ENCODE measurements at regions of chr14 and their contacts with region 1.

Region 1: GRCh38 chr14:54377501-54377900 is 19.3 kb upstream of the CDKN3 start:
- DNase-seq: no peak
- ATAC-seq: no peak
- H3K4me3 ChIP-seq: no peak overlapping the region
- H3K4me3 Mint-ChIP-seq: no peak overlapping the region
- H3K27ac ChIP-seq: no peak overlapping the region
- H3K27ac Mint-ChIP-seq: no peak overlapping the region
- H3K4me1 ChIP-seq: peaks cover 10% of the 10 kb centered on the region in 2 donors
- H3K4me1 Mint-ChIP-seq: peaks cover 25% of the 10 kb centered on the region
- H3K27me3 ChIP-seq: peaks cover 0 to 5% (median 3%) of the 10 kb centered on the region in 4 experiments
- H3K27me3 Mint-ChIP-seq: peaks cover 18% of the 10 kb centered on the region
- CTCF ChIP-seq: no peak

Region 2: GRCh38 chr14:54362089-54362504 is 15.4 kb before region 1 on chr14:
- CTCF ChIA-PET with region 1: no interaction called
- POLR2A ChIA-PET with region 1: no interaction called
- intact Hi-C with region 1: no loop called
- DNase-seq: no peak
- ATAC-seq: no peak
- H3K4me3 ChIP-seq: no peak overlapping the region
- H3K4me3 Mint-ChIP-seq: no peak overlapping the region
- H3K27ac ChIP-seq: no peak overlapping the region
- H3K27ac Mint-ChIP-seq: no peak overlapping the region
- H3K4me1 ChIP-seq: no peaks in the 10 kb centered on the region
- H3K4me1 Mint-ChIP-seq: peaks cover 1% of the 10 kb centered on the region
- H3K27me3 ChIP-seq: peaks cover 0 to 6% (median 0%) of the 10 kb centered on the region in 4 experiments
- H3K27me3 Mint-ChIP-seq: peaks cover 35% of the 10 kb centered on the region
- CTCF ChIP-seq: no peak

Region 3: GRCh38 chr14:54483073-54483745 is 105.7 kb after region 1 on chr14:
- CTCF ChIA-PET with region 1: no interaction called
- POLR2A ChIA-PET with region 1: no interaction called
- intact Hi-C with region 1: loop called (anchors 5 kb)
- DNase-seq: peak; percentile 52
- ATAC-seq: peak; percentile 73
- H3K4me3 ChIP-seq: peak overlapping the region; percentile 29 to 70 (median 45)
- H3K4me3 Mint-ChIP-seq: peak overlapping the region; percentile 67
- H3K27ac ChIP-seq: peak overlapping the region; percentile 33 to 83
- H3K27ac Mint-ChIP-seq: peak overlapping the region; percentile 87
- H3K4me1 ChIP-seq: peaks cover 40 to 57% of the 10 kb centered on the region in 2 donors
- H3K4me1 Mint-ChIP-seq: peaks cover 63% of the 10 kb centered on the region
- H3K27me3 ChIP-seq: no peaks in the 10 kb centered on the region
- H3K27me3 Mint-ChIP-seq: no peaks in the 10 kb centered on the region
- CTCF ChIP-seq: no peak

Region 4: DNA sequence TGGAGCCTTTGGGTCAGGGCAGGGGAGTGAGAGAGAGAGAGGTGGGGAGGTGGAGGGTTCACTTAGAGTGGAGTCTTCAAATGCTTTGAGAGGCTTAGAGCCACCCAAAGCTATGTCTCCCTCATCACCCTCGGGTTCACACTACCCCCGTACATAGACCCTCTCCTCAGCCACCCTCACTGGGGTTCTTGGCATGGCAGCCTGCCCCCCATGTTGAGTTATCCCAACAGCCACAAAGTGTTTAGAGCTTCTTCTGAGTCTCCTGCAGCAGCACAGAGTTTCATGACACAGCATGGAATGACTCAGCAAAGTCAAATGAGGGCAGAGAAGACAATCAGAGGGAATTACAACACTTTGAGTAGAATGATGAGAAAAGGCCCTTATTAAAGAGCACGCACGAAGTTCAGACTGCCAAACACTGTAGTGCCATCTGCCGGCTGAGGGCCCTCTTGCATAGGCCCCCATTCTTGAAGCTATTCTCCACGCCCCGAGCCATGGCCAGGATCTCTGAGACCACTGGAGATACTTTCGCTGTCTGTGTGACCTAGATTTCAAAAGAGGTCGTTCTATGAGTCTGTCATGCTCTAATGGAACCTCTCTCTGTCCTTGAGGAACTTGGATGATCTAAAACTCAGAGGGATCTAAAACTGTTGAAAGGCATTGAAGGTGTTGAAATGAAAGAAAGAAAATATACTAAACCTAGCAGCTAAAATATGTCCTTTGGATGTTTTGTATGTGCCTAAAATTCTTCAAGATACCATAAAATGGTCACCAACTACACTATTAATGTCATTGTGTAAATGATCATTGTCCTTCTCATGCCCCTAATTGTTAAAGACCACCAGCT is 1962.6 kb after region 1 on chr14:
- CTCF ChIA-PET with region 1: no interaction called
- POLR2A ChIA-PET with region 1: no interaction called
- intact Hi-C with region 1: no loop called
- DNase-seq: peak; percentile 60
- ATAC-seq: peak; percentile 41
- H3K4me3 ChIP-seq: no peak overlapping the region
- H3K4me3 Mint-ChIP-seq: no peak overlapping the region
- H3K27ac ChIP-seq: no peak overlapping the region
- H3K27ac Mint-ChIP-seq: no peak overlapping the region
- H3K4me1 ChIP-seq: no peaks in the 10 kb centered on the region
- H3K4me1 Mint-ChIP-seq: peaks cover 14% of the 10 kb centered on the region
- H3K27me3 ChIP-seq: no peaks in the 10 kb centered on the region
- H3K27me3 Mint-ChIP-seq: no peaks in the 10 kb centered on the region
- CTCF ChIP-seq: peak; percentile 73

Measured in B cell (primary cell).